CD8-positive, alpha-beta memory T cell (primary cell): ENCODE measurements at regions of chr14 and their contacts with region 1.

Region 1: GRCh38 chr14:104708606-104709268 is 15.3 kb upstream of the ADSS1 start:
- DNase-seq: peak; percentile 53 to 78 (median 61)
- H3K4me3 ChIP-seq: no peak overlapping the region
- H3K4me3 Mint-ChIP-seq: no peak overlapping the region
- H3K27ac ChIP-seq: no peak overlapping the region
- H3K27ac Mint-ChIP-seq: peak overlapping the region in 1 of 8 donors; percentile 5
- H3K4me1 ChIP-seq: no peaks in the 10 kb centered on the region
- H3K4me1 Mint-ChIP-seq: peaks cover 0 to 3% (median 2%) of the 10 kb centered on the region in 3 donors
- H3K27me3 ChIP-seq: no peaks in the 10 kb centered on the region
- H3K27me3 Mint-ChIP-seq: no peaks in the 10 kb centered on the region

Region 2: DNA sequence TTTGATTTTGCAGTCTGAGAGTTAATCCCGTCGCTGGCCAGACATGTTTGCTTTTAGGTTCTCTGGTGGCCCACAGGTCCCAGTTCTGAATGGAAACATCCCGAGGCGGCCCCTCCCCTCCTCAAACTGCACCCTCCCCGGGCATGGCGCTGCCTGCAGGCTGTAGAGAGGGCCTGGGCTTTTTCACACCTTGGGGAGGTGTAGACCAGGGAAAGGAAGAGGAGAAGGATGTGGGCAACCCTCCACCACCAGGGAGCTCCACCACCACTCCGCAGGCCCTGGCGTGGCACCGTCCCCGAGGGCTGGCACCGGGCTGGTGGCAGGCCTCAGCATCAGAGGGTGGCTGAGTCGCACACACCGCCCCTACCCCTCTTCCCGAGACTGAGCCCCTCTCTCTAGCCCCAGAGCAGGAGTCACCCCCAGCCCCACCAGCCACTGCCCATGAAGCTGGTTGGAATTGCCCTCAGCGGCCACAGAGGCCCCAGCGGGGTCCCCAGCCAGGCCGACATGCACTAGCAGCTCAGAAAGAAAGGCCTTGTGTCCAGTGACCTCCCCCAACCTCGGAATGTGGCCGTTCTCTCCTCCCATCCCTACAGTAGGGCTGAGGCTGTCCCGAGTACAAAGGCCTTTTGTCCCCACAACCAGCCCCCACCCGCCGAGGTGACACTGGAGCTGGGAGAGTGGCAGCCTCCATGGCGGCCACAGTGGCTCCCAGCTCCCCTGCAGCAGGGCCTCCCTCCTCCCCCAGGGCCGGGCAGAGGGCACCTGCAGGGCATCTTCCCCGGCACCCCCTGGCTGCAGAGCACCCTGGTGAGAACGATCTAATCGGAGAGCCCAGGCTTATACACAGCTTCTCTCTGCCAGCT is 42.8 kb before region 1 on chr14:
- CTCF ChIA-PET with region 1: interaction called, 10 read pairs
- POLR2A ChIA-PET with region 1: no interaction called
- DNase-seq: peak in 3 of 5 donors; percentile 28 to 60 (median 44)
- H3K4me3 ChIP-seq: peak overlapping the region; percentile 43
- H3K4me3 Mint-ChIP-seq: peak overlapping the region in 3 of 7 donors; percentile 3 to 63 (median 4)
- H3K27ac ChIP-seq: no peak overlapping the region
- H3K27ac Mint-ChIP-seq: peak overlapping the region in 2 of 8 donors; percentile 4 to 78
- H3K4me1 ChIP-seq: peaks cover 26% of the 10 kb centered on the region
- H3K4me1 Mint-ChIP-seq: peaks cover 20 to 27% (median 24%) of the 10 kb centered on the region in 3 donors
- H3K27me3 ChIP-seq: no peaks in the 10 kb centered on the region
- H3K27me3 Mint-ChIP-seq: peaks cover 18 to 28% of the 10 kb centered on the region in 2 donors

Region 3: DNA sequence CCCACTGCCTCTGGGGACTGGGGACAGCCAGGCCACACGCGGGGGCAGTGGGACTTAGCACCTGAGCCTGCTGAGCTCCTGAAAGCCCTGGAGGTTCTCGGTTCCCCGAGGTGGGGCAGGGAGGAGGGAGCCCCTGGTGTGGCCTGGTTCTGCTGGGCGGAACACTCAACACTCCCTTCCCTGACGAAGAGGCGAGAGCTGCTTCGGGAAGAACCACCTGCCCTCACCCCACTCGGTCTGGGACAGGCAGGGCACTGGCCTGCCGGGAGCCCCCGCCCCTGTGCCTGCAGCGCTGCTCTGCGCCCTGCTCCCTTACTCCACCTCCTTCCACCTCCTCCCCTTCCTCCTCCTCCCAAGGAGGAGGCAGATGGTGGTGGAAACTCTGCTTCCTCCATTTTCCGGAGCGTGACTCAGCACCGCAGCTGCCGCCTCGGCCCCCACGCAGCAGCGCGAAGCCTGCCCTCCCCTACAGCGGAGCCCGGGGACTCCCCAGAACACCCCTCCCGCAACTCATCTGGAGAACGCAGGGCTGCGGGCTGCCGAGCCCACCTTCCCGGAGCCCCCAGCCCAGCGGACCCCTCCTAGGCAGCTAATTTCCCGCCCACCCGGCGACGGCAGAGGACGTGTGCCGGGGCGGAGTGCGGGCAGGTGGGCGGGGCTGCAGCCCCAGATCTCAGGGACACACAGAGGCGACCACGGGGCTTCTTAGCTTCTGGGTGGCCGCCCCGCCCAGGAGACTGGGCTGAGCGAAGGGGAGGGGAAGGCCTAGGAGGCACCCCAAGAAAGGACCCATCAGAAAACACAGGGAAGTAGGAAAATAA is 31.0 kb before region 1 on chr14:
- CTCF ChIA-PET with region 1: interaction called, 11 read pairs
- POLR2A ChIA-PET with region 1: interaction called, 6 read pairs
- DNase-seq: peak; percentile 40 to 73 (median 48)
- H3K4me3 ChIP-seq: peak overlapping the region; percentile 67
- H3K4me3 Mint-ChIP-seq: peak overlapping the region; percentile 27 to 92 (median 79)
- H3K27ac ChIP-seq: peak overlapping the region; percentile 59
- H3K27ac Mint-ChIP-seq: peak overlapping the region in 4 of 8 donors; percentile 27 to 72 (median 34)
- H3K4me1 ChIP-seq: peaks cover 20% of the 10 kb centered on the region
- H3K4me1 Mint-ChIP-seq: peaks cover 0 to 18% (median 6%) of the 10 kb centered on the region in 3 donors
- H3K27me3 ChIP-seq: no peaks in the 10 kb centered on the region
- H3K27me3 Mint-ChIP-seq: peaks cover 0 to 3% of the 10 kb centered on the region in 2 donors